ENCODE measurements at regions of chr14 and their contacts with region 1.

Region 1: DNA sequence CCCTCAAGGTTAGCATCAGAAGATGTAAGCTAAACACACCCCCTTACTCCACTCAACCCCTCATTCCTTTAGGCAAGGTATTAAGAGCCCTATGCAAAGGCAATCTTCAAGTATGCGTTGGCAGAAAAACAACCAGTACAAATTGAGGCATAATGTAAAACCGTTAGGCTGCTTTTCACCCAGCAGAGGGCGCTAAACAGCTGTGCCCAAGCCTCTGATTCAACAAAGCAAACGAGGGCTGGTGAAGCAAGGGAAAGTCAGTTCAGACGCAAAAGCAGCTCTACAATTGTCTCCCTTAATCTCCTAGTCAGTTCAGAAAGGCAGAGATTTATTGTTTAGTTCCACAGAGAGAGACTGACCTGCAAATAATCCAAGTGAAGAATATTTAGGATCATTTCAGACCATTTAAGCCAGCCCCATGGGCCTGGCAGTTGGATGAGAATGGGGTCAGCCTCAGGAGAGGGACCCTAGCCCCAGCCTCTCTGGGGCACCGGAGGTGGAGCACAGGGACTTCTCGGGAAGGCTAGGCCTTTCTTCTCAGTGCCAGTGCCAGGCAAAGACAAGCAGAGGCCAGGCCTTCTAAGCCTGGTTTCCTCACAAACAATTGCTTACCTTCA is 23.5 kb downstream of the DCAF5 start:
- DNase-seq: peak; percentile 57 to 60
- H3K4me3 ChIP-seq: no peak overlapping the region
- H3K27ac ChIP-seq: no peak overlapping the region
- H3K4me1 ChIP-seq: peaks cover 28% of the 10 kb centered on the region
- H3K27me3 ChIP-seq: no peaks in the 10 kb centered on the region
- CTCF ChIP-seq: peak; percentile 98

Region 2: DNA sequence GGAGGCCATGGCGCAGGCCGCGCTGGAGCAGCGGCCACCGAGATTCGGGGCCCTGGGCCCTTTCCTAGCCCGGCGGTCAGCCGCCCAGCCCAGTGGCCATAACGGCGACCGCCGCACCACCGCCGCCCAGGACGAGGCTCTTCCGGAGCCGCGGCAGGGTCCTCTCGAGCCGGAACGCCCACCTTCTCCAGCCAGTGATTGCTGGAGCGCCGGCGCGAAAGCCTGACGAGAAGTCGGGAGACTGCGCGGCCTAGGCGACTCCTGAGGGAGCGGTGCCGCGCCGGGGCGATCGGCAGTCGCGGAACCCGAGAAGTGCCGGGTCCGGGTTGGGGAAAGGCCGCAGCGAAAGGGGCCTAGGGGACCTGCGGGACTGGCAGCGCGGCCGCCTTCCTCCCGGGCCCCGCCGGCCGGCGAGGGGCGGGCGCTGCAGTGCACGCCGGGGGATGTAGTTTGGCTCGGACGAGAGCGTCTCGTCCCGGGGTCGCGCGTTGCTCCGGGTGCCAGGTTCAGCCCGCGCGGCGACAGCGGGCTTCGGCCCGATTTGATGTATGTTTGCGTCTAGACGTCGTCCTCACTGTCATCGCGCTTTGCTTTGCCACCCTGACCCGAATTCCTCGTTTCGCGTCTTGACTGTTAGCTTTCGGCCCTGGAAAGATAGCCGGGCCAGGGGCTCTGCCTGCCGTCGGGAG is 1454.7 kb before region 1 on chr14 and contains the start of gene VTI1B:
- CTCF ChIA-PET with region 1: no interaction called
- POLR2A ChIA-PET with region 1: interaction called, 23 read pairs
- intact Hi-C with region 1: no loop called
- DNase-seq: peak; percentile 66 to 83
- H3K4me3 ChIP-seq: peak within 1 kb of the TSS; percentile 87
- H3K27ac ChIP-seq: peak within 1 kb of the TSS; percentile 79
- H3K4me1 ChIP-seq: peaks cover 20% of the 10 kb centered on the region
- H3K27me3 ChIP-seq: no peaks in the 10 kb centered on the region
- CTCF ChIP-seq: no peak; the same call in 1 of the 2 replicates
- total RNA-seq, gene VTI1B: 131 and 148 TPM in 2 replicates

Region 3: GRCh38 chr14:68513838-68514620 is 615.3 kb before region 1 on chr14:
- CTCF ChIA-PET with region 1: no interaction called
- POLR2A ChIA-PET with region 1: no interaction called
- intact Hi-C with region 1: no loop called
- DNase-seq: no peak
- H3K4me3 ChIP-seq: no peak overlapping the region
- H3K27ac ChIP-seq: peak overlapping the region; percentile 83
- H3K4me1 ChIP-seq: peaks cover 61% of the 10 kb centered on the region
- H3K27me3 ChIP-seq: no peaks in the 10 kb centered on the region
- CTCF ChIP-seq: no peak

Region 4: DNA sequence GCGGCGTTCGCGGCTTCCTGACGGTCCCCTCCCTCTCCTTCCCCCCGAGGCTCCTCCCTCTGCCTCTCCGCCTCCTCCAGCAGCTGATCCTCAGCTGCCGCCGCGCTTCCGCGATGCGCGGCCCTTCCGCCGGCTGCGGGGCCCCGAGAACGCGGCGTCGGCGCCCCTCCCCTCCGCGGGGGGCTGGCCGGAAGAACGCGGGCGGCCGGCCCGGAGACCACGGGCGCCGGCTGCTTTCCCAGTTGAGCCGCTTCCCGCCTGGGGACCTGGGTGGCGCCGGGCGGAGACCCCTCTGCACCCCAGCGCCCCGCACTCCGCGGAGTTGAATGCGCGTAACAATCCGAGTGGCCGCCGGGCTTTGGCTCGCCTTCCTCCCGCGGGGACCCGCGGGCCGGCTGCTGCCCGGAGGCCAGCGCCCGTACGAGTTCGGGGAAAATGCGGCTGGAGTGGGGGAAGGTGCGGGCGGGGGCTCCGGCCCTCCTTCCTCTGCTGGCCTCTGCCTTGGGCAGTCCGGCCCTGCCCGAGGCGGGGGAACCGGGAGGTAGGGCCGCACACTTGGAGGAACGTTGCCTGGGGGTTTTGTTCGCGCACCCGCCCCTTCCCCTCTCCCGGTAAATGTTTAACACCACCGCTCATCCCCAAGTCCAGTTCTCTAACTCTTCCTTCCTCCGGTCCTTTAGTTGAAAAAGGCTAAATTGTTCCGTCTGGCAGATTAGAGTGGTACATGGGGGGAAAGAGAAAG is 23.9 kb after region 1 on chr14:
- CTCF ChIA-PET with region 1: interaction called, 17 read pairs
- POLR2A ChIA-PET with region 1: interaction called, 5 read pairs
- intact Hi-C with region 1: no loop called
- DNase-seq: peak; percentile 83 to 92
- H3K4me3 ChIP-seq: peak overlapping the region; percentile 95
- H3K27ac ChIP-seq: no peak overlapping the region
- H3K4me1 ChIP-seq: peaks cover 17% of the 10 kb centered on the region
- H3K27me3 ChIP-seq: no peaks in the 10 kb centered on the region
- CTCF ChIP-seq: no peak

Region 5: GRCh38 chr14:69204753-69205152 is 75.4 kb after region 1 on chr14:
- CTCF ChIA-PET with region 1: interaction called, 21 read pairs
- POLR2A ChIA-PET with region 1: no interaction called
- intact Hi-C with region 1: no loop called
- DNase-seq: no peak
- H3K4me3 ChIP-seq: no peak overlapping the region
- H3K27ac ChIP-seq: no peak overlapping the region
- H3K4me1 ChIP-seq: no peaks in the 10 kb centered on the region
- H3K27me3 ChIP-seq: no peaks in the 10 kb centered on the region
- CTCF ChIP-seq: no peak

Region 6: GRCh38 chr14:69242311-69243224 is 113.2 kb after region 1 on chr14:
- CTCF ChIA-PET with region 1: interaction called, 4 read pairs
- POLR2A ChIA-PET with region 1: no interaction called
- intact Hi-C with region 1: loop called (anchors 1 kb)
- DNase-seq: peak in 1 of 2 experiments; percentile 47
- H3K4me3 ChIP-seq: no peak overlapping the region
- H3K27ac ChIP-seq: no peak overlapping the region
- H3K4me1 ChIP-seq: no peaks in the 10 kb centered on the region
- H3K27me3 ChIP-seq: no peaks in the 10 kb centered on the region
- CTCF ChIP-seq: peak; percentile 94

Region 7: GRCh38 chr14:69460093-69460701 is 330.8 kb after region 1 on chr14:
- CTCF ChIA-PET with region 1: interaction called, 7 read pairs
- POLR2A ChIA-PET with region 1: no interaction called
- intact Hi-C with region 1: loop called (anchors 1 kb)
- DNase-seq: peak; percentile 69 to 82
- H3K4me3 ChIP-seq: no peak overlapping the region
- H3K27ac ChIP-seq: no peak overlapping the region
- H3K4me1 ChIP-seq: no peaks in the 10 kb centered on the region
- H3K27me3 ChIP-seq: no peaks in the 10 kb centered on the region
- CTCF ChIP-seq: peak; percentile 91

Region 8: DNA sequence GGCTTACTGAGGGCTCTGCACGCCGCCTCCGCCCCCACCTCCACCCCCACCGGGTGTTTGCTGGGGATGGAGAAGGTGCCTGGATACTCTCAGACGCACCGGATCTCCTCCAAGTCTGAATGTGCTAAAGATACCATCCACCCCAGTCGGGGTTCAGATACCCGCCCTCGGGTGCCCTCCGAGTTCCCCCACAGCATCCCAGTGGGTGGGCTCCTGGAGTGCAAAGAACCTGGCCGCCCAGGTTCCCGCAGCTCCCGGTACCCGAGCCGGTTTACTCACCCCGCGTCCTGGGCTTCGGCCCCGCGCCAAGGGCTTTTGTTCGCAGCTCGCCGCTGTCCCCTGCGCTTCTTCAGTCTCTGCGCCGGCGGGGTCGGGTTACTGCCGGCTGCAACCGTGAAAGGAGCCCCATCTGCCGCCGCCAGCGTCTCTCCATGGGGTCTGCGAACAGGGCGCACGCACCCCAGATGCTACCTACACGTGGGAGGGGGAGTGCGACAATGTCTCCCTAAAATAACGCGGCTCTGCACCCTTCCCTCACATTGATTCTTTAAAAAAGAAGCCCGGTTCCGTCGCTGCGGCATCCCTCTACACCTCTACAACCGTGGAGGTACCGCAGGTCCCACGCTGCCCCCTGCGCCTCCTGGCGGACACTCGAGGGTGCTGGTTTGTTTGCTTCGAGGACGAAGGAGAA is 445.0 kb after region 1 on chr14 and contains the start of gene CCDC177:
- CTCF ChIA-PET with region 1: no interaction called
- POLR2A ChIA-PET with region 1: no interaction called
- intact Hi-C with region 1: loop called (anchors 2 kb)
- DNase-seq: peak; percentile 45 to 73
- H3K4me3 ChIP-seq: peak within 1 kb of the TSS; percentile 32; the same call in 1 of the 2 replicates
- H3K27ac ChIP-seq: no peak within 1 kb of the TSS
- H3K4me1 ChIP-seq: peaks cover 11% of the 10 kb centered on the region
- H3K27me3 ChIP-seq: peaks cover 16% of the 10 kb centered on the region
- CTCF ChIP-seq: peak; percentile 93
- total RNA-seq, gene CCDC177: not detected in 2 replicates